ENCODE measurements at regions of chr10 and their contacts with region 1.

Region 1: GRCh38 chr10:84341538-84341856 is 13.1 kb downstream of the CCSER2 start:
- DNase-seq: no peak
- H3K4me3 ChIP-seq: no peak overlapping the region
- H3K27ac ChIP-seq: no peak overlapping the region
- H3K4me1 ChIP-seq: no peaks in the 10 kb centered on the region
- H3K27me3 ChIP-seq: no peaks in the 10 kb centered on the region
- CTCF ChIP-seq: no peak
- POLR2A ChIP-seq: no peak

Region 2: DNA sequence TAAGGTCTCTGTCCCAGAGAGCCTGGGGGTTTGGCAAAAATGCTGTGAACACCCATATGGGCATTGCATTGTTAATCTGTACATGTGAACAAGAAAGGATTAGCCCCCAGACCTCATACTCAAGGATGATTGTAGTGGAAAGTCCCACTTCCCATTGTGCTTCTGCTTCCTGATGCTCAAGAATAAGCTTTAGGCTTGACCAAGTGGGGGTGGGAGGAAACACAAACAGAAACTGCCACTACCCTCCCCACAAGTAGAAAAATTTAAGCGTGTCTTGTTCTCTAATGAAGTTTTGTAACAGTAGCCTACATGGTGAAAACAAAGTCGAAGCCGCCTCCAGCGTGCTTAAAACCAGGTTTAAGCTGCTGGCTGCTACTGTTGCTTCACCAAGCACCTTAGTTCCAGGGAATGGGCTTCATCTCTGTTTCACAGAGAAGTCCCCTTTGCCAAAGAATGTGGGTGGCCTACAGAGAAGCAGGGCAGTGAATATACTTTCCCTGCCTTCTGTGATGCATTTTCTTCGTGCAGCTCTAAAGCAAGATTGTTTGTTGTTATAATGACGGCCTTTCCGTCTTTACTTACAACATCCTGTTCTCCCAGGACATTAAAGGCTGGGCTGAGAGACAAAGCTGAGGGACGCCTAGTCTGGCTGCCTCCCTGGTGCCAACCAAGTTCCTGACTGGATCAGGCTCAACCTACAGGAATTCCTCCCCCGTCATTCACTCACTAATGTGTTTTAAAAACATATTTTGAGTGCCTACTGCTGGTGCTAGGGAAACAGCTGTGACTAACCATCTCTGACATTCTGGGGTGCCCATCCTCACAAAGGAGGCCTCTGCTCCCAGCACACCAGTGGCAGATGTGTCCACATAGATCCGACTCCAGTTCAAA is 45.2 kb before region 1 on chr10:
- intact Hi-C with region 1: loop called (anchors 2 kb)
- DNase-seq: no peak
- H3K4me3 ChIP-seq: no peak overlapping the region
- H3K27ac ChIP-seq: peak overlapping the region in 1 of 2 donors; percentile 14
- H3K4me1 ChIP-seq: no peaks in the 10 kb centered on the region
- H3K27me3 ChIP-seq: no peaks in the 10 kb centered on the region
- CTCF ChIP-seq: no peak
- POLR2A ChIP-seq: no peak

Region 3: GRCh38 chr10:85666102-85666501 is 1324.6 kb after region 1 on chr10:
- intact Hi-C with region 1: no loop called
- DNase-seq: no peak
- H3K4me3 ChIP-seq: no peak overlapping the region
- H3K27ac ChIP-seq: no peak overlapping the region
- H3K4me1 ChIP-seq: no peaks in the 10 kb centered on the region
- H3K27me3 ChIP-seq: no peaks in the 10 kb centered on the region
- CTCF ChIP-seq: no peak
- POLR2A ChIP-seq: no peak